Activated CD4-positive, alpha-beta memory T cell treated with anti-CD3 and anti-CD28 coated beads for 36 hours (primary cell): ENCODE measurements at regions of chr7 and their contacts with region 1.

Region 1: DNA sequence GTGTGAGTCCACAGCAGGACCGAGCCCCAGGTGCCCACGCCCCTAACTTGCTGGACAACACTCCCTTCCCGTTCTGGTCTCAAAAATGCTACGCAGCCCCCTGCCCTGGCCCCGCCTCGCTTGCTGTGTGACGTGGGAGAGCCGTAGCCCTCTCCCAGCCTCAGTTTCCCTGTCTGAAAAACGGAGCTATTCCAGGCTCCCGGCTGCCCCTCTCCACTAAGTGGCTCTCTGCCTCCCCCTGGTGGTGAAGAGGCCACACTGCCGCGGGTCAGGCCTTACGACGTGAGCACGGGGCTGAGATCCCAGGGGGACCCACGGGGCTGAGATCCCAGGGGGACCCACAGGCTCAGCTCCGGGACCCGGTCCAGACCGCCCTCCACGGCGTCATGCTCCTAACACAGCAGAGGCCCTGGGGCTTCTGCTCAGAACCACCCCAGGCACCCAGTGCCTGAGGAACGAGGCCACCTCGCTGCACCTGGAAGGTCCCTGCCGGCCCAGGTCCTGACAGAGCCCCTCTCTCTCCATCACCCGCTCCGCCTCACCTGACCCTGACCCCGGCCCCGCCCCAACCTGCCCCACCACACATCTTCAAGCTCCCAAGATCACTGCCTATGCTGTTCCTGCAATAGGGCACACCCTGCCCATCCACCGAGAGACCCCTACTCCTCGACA is 26.7 kb downstream of the MICALL2 start:
- DNase-seq: peak; percentile 84
- H3K4me3 Mint-ChIP-seq: no peak overlapping the region
- H3K27ac Mint-ChIP-seq: no peak overlapping the region
- H3K4me1 Mint-ChIP-seq: peaks cover 3% of the 10 kb centered on the region
- H3K27me3 Mint-ChIP-seq: peaks cover 2% of the 10 kb centered on the region

Region 2: DNA sequence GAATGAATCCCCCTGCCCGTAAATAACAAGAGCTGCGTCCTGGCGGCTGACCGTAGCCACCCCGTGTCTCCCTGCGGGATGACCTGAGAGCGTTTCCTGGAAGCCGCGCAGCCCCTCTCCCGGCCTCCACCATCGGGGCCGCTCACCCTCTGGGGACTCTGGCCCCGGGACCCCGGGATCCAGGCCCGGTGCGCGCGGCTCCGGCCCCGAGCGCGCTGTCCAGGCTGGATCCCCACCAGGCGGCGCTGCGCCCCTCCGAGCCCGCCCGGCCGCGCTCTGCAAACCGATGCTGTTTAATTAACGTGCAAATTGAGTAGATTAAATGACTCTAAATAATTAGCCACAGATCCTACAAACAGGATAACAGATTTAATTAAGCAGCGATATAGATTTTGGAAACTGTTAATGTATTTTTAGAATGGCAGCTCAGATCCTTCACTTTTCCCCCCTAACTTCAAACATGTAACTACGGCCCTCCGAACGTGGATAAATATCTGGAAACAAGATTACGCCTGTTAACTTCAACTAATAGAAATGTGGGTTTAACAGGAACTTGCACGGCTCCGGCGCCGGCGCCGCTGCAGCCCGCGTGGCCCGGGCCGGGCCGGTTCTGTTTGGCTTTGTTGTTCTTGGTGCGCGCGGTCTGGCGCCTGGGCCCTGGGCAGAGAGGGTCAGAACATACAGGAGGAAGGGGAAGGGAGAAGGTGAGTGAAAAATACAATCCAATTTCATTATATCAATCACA is 206.9 kb before region 1 on chr7:
- CTCF ChIA-PET with region 1: interaction called, 23 read pairs
- POLR2A ChIA-PET with region 1: no interaction called
- intact Hi-C with region 1: loop called (anchors 1 kb)
- DNase-seq: peak; percentile 51
- H3K4me3 Mint-ChIP-seq: no peak overlapping the region
- H3K27ac Mint-ChIP-seq: peak overlapping the region; percentile 62
- H3K4me1 Mint-ChIP-seq: no peaks in the 10 kb centered on the region
- H3K27me3 Mint-ChIP-seq: peaks cover 58% of the 10 kb centered on the region

Region 3: GRCh38 chr7:1418505-1419309 is 13.8 kb before region 1 on chr7:
- CTCF ChIA-PET with region 1: interaction called, 21 read pairs
- POLR2A ChIA-PET with region 1: no interaction called
- intact Hi-C with region 1: loop called (anchors 2 kb)
- DNase-seq: peak; percentile 18
- H3K4me3 Mint-ChIP-seq: no peak overlapping the region
- H3K27ac Mint-ChIP-seq: peak overlapping the region; percentile 2
- H3K4me1 Mint-ChIP-seq: peaks cover 25% of the 10 kb centered on the region
- H3K27me3 Mint-ChIP-seq: peaks cover 13% of the 10 kb centered on the region

Region 4: GRCh38 chr7:1829111-1829510 is 396.6 kb after region 1 on chr7:
- CTCF ChIA-PET with region 1: no interaction called
- POLR2A ChIA-PET with region 1: no interaction called
- intact Hi-C with region 1: no loop called
- DNase-seq: no peak
- H3K4me3 Mint-ChIP-seq: no peak overlapping the region
- H3K27ac Mint-ChIP-seq: no peak overlapping the region
- H3K4me1 Mint-ChIP-seq: peaks cover 13% of the 10 kb centered on the region
- H3K27me3 Mint-ChIP-seq: no peaks in the 10 kb centered on the region